Mammary epithelial cell (primary cell): ENCODE measurements at regions of chrX and their contacts with region 1.

Region 1: GRCh38 chrX:120244735-120245498 is 5.7 kb upstream of the ZBTB33 start:
- DNase-seq: peak; percentile 74
- H3K4me3 ChIP-seq: peak overlapping the region; percentile 53 to 68 (median 57)
- H3K27ac ChIP-seq: peak overlapping the region; percentile 82
- H3K4me1 ChIP-seq: peaks cover 5% of the 10 kb centered on the region
- H3K27me3 ChIP-seq: no peaks in the 10 kb centered on the region
- CTCF ChIP-seq: no peak

Region 2: GRCh38 chrX:120299928-120300327 is 55.0 kb after region 1 on chrX:
- CTCF ChIA-PET with region 1: no interaction called
- dilution Hi-C with region 1: no loop called
- in situ Hi-C with region 1: no loop called
- intact Hi-C with region 1: loop called (anchors 2 kb)
- DNase-seq: peak; percentile 19
- H3K4me3 ChIP-seq: no peak overlapping the region
- H3K27ac ChIP-seq: no peak overlapping the region
- H3K4me1 ChIP-seq: peaks cover 3% of the 10 kb centered on the region
- H3K27me3 ChIP-seq: no peaks in the 10 kb centered on the region
- CTCF ChIP-seq: peak in 1 of 2 donors; percentile 60

Region 3: GRCh38 chrX:120310861-120311726 is 66.2 kb after region 1 on chrX and contains the start of gene TMEM255A:
- CTCF ChIA-PET with region 1: no interaction called
- dilution Hi-C with region 1: loop called (anchors 5 kb)
- in situ Hi-C with region 1: no loop called
- intact Hi-C with region 1: no loop called
- DNase-seq: no peak
- H3K4me3 ChIP-seq: peak within 1 kb of the TSS; percentile 35 to 44 (median 43)
- H3K27ac ChIP-seq: no peak within 1 kb of the TSS
- H3K4me1 ChIP-seq: peaks cover 11% of the 10 kb centered on the region
- H3K27me3 ChIP-seq: no peaks in the 10 kb centered on the region
- CTCF ChIP-seq: no peak
- total RNA-seq, gene TMEM255A: 0.40 TPM in 1 of 2 donors, not detected in the other